ENCODE measurements at regions of chr10 and their contacts with region 1.

Region 1: DNA sequence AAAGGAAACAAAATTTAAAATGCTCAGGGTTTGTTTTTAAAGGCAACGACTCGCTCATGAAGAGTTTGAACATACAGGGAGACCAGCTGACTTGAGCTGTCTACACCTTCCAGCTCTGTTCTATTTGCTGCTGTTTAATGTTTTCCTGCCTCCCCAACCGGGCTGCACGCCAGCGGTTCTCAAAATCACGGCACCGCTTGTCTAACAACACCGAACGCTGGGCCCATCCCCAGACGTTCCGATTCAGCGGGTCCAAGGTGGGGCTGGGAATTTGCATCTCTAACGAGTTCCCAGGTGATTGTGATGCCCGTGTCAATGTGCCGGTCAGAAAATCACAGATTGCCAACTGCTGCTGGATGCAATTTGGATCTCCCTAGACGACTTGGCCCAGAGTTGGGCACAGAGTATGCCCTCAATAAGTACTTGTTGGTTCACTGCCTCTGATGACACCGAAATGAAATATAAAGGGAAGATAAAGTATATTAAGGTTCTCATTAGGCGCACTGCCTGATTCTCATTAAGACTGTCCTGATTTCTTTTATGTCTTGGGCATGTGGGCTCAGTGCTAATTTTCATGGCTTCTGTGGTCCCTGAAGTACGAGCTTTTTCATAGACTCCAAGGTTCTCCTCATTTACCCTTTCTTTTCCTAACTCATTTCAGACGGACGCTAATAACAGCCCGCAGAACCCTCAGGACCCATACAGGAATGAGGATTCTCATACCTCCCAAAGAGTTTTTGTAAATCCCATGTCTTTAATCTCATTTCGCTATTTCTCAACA is 28.5 kb downstream of the CELF2 start:
- DNase-seq: no peak
- H3K4me3 ChIP-seq: no peak overlapping the region
- H3K27ac ChIP-seq: no peak overlapping the region
- H3K4me1 ChIP-seq: no peaks in the 10 kb centered on the region
- H3K27me3 ChIP-seq: no peaks in the 10 kb centered on the region
- CTCF ChIP-seq: no peak
- POLR2A ChIP-seq: no peak

Region 2: DNA sequence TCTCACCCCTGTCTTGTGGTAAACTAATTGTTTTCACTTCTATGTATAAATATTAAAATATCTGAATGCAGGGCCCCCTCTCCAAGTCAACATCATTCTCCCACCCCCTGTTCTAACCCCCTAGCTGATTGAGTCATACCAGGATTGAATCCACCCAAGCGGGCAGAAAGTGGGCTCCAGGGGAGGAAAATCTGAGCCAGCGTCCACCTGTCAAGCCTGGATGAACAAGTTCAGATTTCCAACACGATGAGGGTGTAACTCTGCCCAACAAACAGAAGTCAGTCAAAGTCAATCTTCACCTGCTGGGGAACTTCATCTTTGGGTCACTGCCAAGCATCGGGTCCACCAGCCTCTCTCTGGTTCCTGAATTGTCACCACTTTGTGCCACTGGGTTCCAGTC is 191.5 kb before region 1 on chr10:
- intact Hi-C with region 1: no loop called
- DNase-seq: no peak
- H3K4me3 ChIP-seq: no peak overlapping the region
- H3K27ac ChIP-seq: no peak overlapping the region
- H3K4me1 ChIP-seq: no peaks in the 10 kb centered on the region
- H3K27me3 ChIP-seq: no peaks in the 10 kb centered on the region
- CTCF ChIP-seq: no peak
- POLR2A ChIP-seq: no peak

Region 3: GRCh38 chr10:11004144-11005077 is 41.8 kb before region 1 on chr10:
- intact Hi-C with region 1: no loop called
- DNase-seq: no peak
- H3K4me3 ChIP-seq: no peak overlapping the region
- H3K27ac ChIP-seq: no peak overlapping the region
- H3K4me1 ChIP-seq: no peaks in the 10 kb centered on the region
- H3K27me3 ChIP-seq: no peaks in the 10 kb centered on the region
- CTCF ChIP-seq: no peak
- POLR2A ChIP-seq: no peak

Region 4: GRCh38 chr10:11165591-11166543 is 119.7 kb after region 1 on chr10:
- intact Hi-C with region 1: loop called (anchors 10 kb)
- DNase-seq: peak; percentile 28
- H3K4me3 ChIP-seq: peak overlapping the region; percentile 47 to 56
- H3K27ac ChIP-seq: peak overlapping the region; percentile 70 to 73
- H3K4me1 ChIP-seq: no peaks in the 10 kb centered on the region
- H3K27me3 ChIP-seq: no peaks in the 10 kb centered on the region
- CTCF ChIP-seq: peak in 3 of 4 experiments; percentile 29 to 38 (median 36)
- POLR2A ChIP-seq: no peak

Region 5: DNA sequence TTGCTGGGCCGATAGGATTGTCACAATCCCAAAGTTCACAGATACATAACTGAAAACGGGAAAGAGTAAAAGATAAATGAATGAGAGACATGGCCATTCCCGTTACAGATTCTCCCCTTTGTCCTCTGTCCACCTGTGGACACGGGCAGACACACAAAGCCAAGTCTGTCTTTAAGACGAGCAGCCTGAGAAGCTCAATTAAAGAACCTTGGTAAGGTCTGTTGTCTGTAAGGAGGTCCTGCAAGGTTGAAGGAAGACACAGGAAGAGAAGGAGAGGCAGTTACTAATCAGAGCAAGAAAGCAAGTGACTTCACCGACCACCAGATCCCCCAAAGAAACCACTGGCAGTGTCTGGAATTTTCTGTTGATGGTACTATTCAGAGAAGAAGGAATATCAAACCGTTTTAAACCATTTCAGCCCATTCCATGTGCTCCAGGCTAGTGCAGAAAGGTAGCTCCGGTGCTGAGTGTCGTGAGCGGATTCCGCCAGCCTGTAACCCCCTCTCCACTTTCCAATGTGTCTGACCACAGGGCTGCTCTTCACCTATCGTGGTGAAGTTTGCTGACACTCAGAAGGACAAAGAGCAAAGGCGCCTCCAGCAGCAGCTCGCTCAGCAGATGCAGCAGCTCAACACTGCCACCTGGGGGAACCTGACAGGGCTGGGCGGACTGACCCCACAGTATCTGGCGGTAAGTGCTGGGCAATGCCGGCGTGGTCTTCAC is 224.1 kb after region 1 on chr10:
- intact Hi-C with region 1: loop called (anchors 10 kb)
- DNase-seq: peak; percentile 70
- H3K4me3 ChIP-seq: no peak overlapping the region
- H3K27ac ChIP-seq: no peak overlapping the region
- H3K4me1 ChIP-seq: no peaks in the 10 kb centered on the region
- H3K27me3 ChIP-seq: no peaks in the 10 kb centered on the region
- CTCF ChIP-seq: peak; percentile 71 to 85 (median 80)
- POLR2A ChIP-seq: no peak